ENCODE measurements at regions of chr5 and their contacts with region 1.

Region 1: GRCh38 chr5:138352071-138352721 is at the start of gene KDM3B:
- DNase-seq: peak; percentile 90
- H3K4me3 ChIP-seq: peak within 1 kb of the TSS; percentile 98
- H3K27ac ChIP-seq: peak within 1 kb of the TSS; percentile 73
- H3K4me1 ChIP-seq: peaks cover 19% of the 10 kb centered on the region
- CTCF ChIP-seq: peak; percentile 91
- total RNA-seq, gene KDM3B: 51.1 and 57.1 TPM in 2 replicates

Region 2: GRCh38 chr5:138337685-138338410 is 14.3 kb before region 1 on chr5 and contains the start of gene FAM53C:
- CTCF ChIA-PET with region 1: interaction called, 34 read pairs
- POLR2A ChIA-PET with region 1: interaction called, 102 read pairs
- intact Hi-C with region 1: loop called (anchors 1 kb)
- DNase-seq: peak; percentile 96
- H3K4me3 ChIP-seq: peak within 1 kb of the TSS; percentile 89
- H3K27ac ChIP-seq: peak within 1 kb of the TSS; percentile 67
- H3K4me1 ChIP-seq: peaks cover 26% of the 10 kb centered on the region
- CTCF ChIP-seq: 0 out of 2 replicates have a peak, but pooled peaks have one; percentile 23
- total RNA-seq, gene FAM53C: 38.4 and 42.3 TPM in 2 replicates

Region 3: DNA sequence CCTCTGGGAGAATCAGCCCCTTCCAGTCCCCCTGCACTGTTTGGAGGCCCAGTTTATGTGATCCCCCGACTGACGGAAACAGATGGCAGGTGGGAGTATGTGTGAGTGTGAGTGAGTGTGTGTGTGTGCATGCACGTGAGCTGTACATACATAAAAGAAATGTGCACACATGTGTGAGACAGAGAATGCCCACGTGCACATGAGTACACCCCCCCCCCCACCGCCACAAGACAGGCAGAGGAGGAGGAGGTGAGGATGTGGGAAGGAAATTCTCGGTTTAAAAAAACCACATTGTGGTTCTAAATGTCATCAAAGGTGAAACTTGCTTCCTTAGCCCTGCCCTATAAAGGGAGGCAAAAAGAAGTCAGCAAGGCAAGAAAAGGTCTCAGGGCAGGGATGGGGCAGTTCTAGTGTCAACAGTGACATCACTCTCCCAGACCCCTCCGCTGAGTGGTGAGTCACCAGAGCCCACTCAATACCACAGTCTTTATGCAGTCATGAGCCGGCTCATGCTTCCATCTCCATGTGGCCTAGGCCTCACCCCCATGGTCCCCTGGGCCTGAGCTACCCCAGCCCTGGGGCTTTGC is 302.2 kb after region 1 on chr5:
- CTCF ChIA-PET with region 1: no interaction called
- POLR2A ChIA-PET with region 1: no interaction called
- intact Hi-C with region 1: no loop called
- DNase-seq: no peak
- H3K4me3 ChIP-seq: no peak overlapping the region
- H3K27ac ChIP-seq: no peak overlapping the region
- H3K4me1 ChIP-seq: peaks cover 17% of the 10 kb centered on the region
- CTCF ChIP-seq: no peak

Region 4: GRCh38 chr5:138819081-138819480 is 466.9 kb after region 1 on chr5:
- CTCF ChIA-PET with region 1: no interaction called
- POLR2A ChIA-PET with region 1: no interaction called
- intact Hi-C with region 1: no loop called
- DNase-seq: no peak
- H3K4me3 ChIP-seq: no peak overlapping the region
- H3K27ac ChIP-seq: no peak overlapping the region
- H3K4me1 ChIP-seq: no peaks in the 10 kb centered on the region
- CTCF ChIP-seq: no peak

Measured in OCI-LY7 (cell line).